Lower lobe of right lung (tissue), 2 donors: ENCODE measurements at regions of chr6 and their contacts with region 1.

Region 1: DNA sequence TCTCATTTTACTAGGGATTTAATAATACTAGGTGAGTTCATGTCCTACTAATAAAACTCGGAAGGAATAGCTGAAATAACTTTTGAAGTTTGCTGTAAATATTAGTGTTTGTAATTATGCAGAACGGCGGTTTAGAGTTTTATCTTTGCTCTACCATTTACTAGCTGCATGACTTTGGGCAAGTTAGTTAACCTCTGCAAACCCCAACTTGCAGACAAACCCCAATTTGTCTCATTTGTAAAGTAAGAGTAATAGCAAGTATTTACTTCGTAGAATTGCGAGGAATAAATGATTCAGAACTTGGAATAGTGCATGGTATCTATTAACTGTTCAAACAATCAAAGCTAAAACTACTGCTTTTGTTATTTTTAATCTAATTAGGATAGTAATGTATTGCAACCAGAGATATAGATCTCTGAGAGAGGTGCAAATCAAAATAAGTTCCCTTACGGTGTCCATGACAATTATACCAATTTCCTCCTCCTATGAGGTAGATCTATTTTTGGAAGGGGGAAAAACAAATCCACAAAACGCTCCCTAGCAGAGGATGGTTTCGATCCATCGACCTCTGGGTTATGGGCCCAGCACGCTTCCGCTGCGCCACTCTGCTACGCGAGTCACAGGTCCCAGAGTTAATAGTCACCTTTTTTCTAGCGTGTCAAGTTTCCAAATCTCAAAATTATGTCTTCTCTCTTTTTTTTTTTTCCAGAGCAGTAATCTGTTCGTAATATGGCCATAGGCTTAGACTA is 35.1 kb upstream of the BTN3A2 start:
- DNase-seq: no peak
- ATAC-seq: peak in 1 of 2 donors; percentile 62
- H3K4me3 ChIP-seq: no peak overlapping the region
- H3K27ac ChIP-seq: no peak overlapping the region
- H3K4me1 ChIP-seq: peaks cover 13% of the 10 kb centered on the region
- H3K27me3 ChIP-seq: peaks cover 86% of the 10 kb centered on the region
- CTCF ChIP-seq: no peak

Region 2: DNA sequence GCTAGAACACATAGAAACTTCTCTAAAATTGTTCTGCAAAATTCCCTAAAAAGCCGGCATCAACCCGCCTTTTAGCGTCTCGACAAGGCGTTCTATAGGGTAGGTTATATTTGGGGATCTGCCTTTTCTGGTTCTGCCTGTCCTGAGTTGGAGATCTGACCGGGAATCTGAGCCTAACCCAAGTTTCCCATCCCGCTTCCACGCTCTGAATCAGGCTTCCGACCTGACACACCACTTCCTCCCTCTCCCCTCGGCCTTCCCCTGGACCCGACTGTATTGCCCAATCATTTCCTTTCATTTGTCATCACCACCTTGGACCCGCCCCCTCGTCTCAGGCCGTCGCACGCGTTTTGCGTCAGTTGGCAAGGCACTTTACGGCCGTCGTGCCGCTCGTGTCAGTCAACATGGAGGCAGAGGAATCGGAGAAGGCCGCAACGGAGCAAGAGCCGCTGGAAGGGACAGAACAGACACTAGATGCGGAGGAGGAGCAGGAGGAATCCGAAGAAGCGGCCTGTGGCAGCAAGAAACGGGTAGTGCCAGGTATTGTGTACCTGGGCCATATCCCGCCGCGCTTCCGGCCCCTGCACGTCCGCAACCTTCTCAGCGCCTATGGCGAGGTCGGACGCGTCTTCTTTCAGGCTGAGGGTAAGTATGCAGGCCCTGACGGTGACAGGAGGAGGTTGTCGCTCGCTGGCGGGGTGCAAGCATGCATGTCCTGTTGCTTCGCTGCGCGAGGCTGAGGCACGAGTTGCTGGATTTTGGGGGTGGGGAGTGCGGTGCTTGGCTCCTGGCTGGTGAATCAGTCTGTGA is 266.8 kb after region 1 on chr6 and contains the start of gene ABT1:
- intact Hi-C with region 1: loop called (anchors 10 kb)
- DNase-seq: peak; percentile 98
- ATAC-seq: peak; percentile 97 to 98
- H3K4me3 ChIP-seq: peak within 1 kb of the TSS; percentile 91
- H3K27ac ChIP-seq: peak within 1 kb of the TSS; percentile 94
- H3K4me1 ChIP-seq: peaks cover 19% of the 10 kb centered on the region
- H3K27me3 ChIP-seq: peaks cover 20% of the 10 kb centered on the region
- CTCF ChIP-seq: no peak
- total RNA-seq, gene ABT1: 13.5 TPM

Region 3: GRCh38 chr6:26640806-26641205 is 310.9 kb after region 1 on chr6:
- intact Hi-C with region 1: no loop called
- DNase-seq: no peak
- ATAC-seq: no peak
- H3K4me3 ChIP-seq: no peak overlapping the region
- H3K27ac ChIP-seq: no peak overlapping the region
- H3K4me1 ChIP-seq: no peaks in the 10 kb centered on the region
- H3K27me3 ChIP-seq: no peaks in the 10 kb centered on the region
- CTCF ChIP-seq: no peak